ENCODE measurements at regions of chr20 and their contacts with region 1.

Region 1: GRCh38 chr20:37534401-37535157 is 6.9 kb upstream of the BLCAP start:
- DNase-seq: no peak
- H3K4me3 ChIP-seq: no peak overlapping the region
- H3K27ac ChIP-seq: no peak overlapping the region
- H3K27me3 ChIP-seq: peaks cover 4% of the 10 kb centered on the region
- CTCF ChIP-seq: peak; percentile 88

Region 2: DNA sequence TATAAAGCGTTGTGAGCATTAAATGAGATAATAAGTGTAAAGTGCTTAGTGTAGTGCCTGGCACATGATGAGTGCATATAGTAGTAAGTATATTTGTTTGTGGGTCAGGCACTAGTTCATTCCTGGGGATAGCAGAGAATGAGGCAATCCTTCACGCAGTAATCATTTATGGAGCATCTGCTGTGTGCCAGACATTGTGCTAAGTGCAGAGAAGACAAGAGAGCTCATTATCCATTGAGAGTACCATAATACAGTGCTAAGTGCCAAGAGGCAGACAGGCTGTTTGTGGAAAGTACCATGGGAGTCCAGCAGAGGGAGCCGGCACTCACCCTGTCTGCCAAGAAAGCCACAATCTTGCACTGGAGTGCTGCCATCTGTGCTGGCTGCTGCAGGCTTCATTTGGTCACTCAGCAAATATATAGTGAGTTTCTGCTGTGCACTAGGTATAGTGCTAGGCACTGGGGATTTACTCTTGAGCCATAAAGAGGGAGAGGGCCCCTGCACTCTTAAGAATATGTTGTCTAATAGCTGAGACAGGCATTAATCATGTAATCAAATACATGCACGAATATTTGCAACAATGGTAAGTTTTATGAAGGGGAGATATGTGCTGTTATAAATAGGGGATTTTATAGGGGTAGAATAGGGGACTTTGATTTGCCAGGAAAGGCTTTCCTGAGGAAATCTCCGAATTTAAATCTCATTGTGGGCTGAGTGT is 342.3 kb before region 1 on chr20:
- CTCF ChIA-PET with region 1: interaction called, 43 read pairs
- POLR2A ChIA-PET with region 1: no interaction called
- DNase-seq: peak; percentile 79
- H3K4me3 ChIP-seq: no peak overlapping the region
- H3K27ac ChIP-seq: no peak overlapping the region
- H3K27me3 ChIP-seq: no peaks in the 10 kb centered on the region
- CTCF ChIP-seq: peak; percentile 98

Region 3: GRCh38 chr20:37249304-37249703 is 285.3 kb before region 1 on chr20:
- CTCF ChIA-PET with region 1: interaction called, 10 read pairs
- POLR2A ChIA-PET with region 1: no interaction called
- DNase-seq: no peak
- H3K4me3 ChIP-seq: no peak overlapping the region
- H3K27ac ChIP-seq: no peak overlapping the region
- H3K27me3 ChIP-seq: peaks cover 4% of the 10 kb centered on the region
- CTCF ChIP-seq: no peak

Region 4: GRCh38 chr20:37276494-37277252 is 257.9 kb before region 1 on chr20:
- CTCF ChIA-PET with region 1: interaction called, 75 read pairs
- POLR2A ChIA-PET with region 1: interaction called, 3 read pairs
- DNase-seq: peak; percentile 85
- H3K4me3 ChIP-seq: peak overlapping the region; percentile 25; the same call in 1 of the 2 replicates
- H3K27ac ChIP-seq: peak overlapping the region; percentile 91
- H3K27me3 ChIP-seq: no peaks in the 10 kb centered on the region
- CTCF ChIP-seq: peak; percentile 47

Region 5: GRCh38 chr20:37392421-37393178 is 142.0 kb before region 1 on chr20:
- CTCF ChIA-PET with region 1: interaction called, 10 read pairs
- POLR2A ChIA-PET with region 1: no interaction called
- DNase-seq: no peak
- H3K4me3 ChIP-seq: no peak overlapping the region
- H3K27ac ChIP-seq: no peak overlapping the region
- H3K27me3 ChIP-seq: no peaks in the 10 kb centered on the region
- CTCF ChIP-seq: peak; percentile 44; the same call in 1 of the 2 replicates

Region 6: GRCh38 chr20:37469531-37469930 is 65.0 kb before region 1 on chr20:
- CTCF ChIA-PET with region 1: no interaction called
- POLR2A ChIA-PET with region 1: no interaction called
- DNase-seq: no peak
- H3K4me3 ChIP-seq: no peak overlapping the region
- H3K27ac ChIP-seq: no peak overlapping the region
- H3K27me3 ChIP-seq: peaks cover 55% of the 10 kb centered on the region
- CTCF ChIP-seq: no peak

Region 7: GRCh38 chr20:37552415-37552814 is 17.8 kb after region 1 on chr20:
- CTCF ChIA-PET with region 1: no interaction called
- POLR2A ChIA-PET with region 1: no interaction called
- DNase-seq: no peak
- H3K4me3 ChIP-seq: no peak overlapping the region
- H3K27ac ChIP-seq: no peak overlapping the region
- H3K27me3 ChIP-seq: peaks cover 12% of the 10 kb centered on the region
- CTCF ChIP-seq: no peak

Region 8: DNA sequence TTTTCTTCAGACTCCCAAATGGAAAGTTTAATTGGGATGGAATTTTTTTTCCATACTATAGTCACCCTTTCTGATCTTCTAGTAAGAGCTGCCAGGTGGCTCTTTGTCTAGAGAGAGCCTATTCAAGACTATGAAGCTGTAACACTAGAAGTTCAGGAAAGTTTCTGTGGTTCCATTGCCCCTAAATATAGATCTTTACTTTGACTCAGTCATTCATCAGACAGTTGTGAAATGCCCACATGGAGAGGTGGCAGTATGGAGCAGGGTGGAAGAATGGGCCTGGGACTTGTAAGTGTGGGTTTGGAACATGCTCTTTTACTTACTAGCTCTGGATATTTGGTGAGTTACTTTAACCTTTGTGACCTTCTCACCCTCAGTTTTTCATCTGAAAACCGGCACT is 247.1 kb after region 1 on chr20:
- CTCF ChIA-PET with region 1: no interaction called
- POLR2A ChIA-PET with region 1: no interaction called
- DNase-seq: no peak
- H3K4me3 ChIP-seq: no peak overlapping the region
- H3K27ac ChIP-seq: no peak overlapping the region
- H3K27me3 ChIP-seq: no peaks in the 10 kb centered on the region
- CTCF ChIP-seq: no peak

Measured in AG04450 (cell line).